PC-9 (cell line): ENCODE measurements at regions of chr2 and their contacts with region 1.

Region 1: GRCh38 chr2:27421028-27421427 is 7.4 kb upstream of the NRBP1 start:
- DNase-seq: peak in 1 of 2 experiments; percentile 68
- H3K4me3 ChIP-seq: no peak overlapping the region
- H3K27ac ChIP-seq: peak overlapping the region; percentile 18; the same call in 1 of the 2 replicates
- H3K4me1 ChIP-seq: peaks cover 15% of the 10 kb centered on the region
- H3K27me3 ChIP-seq: no peaks in the 10 kb centered on the region
- CTCF ChIP-seq: no peak

Region 2: GRCh38 chr2:27271631-27272340 is 149.2 kb before region 1 on chr2:
- CTCF ChIA-PET with region 1: no interaction called
- POLR2A ChIA-PET with region 1: interaction called, 11 read pairs
- intact Hi-C with region 1: no loop called
- DNase-seq: no peak
- H3K4me3 ChIP-seq: no peak overlapping the region
- H3K27ac ChIP-seq: no peak overlapping the region
- H3K4me1 ChIP-seq: no peaks in the 10 kb centered on the region
- H3K27me3 ChIP-seq: no peaks in the 10 kb centered on the region
- CTCF ChIP-seq: no peak